Heart right ventricle (tissue), 16 donors: ENCODE measurements at regions of chr17 and their contacts with region 1.

Region 1: DNA sequence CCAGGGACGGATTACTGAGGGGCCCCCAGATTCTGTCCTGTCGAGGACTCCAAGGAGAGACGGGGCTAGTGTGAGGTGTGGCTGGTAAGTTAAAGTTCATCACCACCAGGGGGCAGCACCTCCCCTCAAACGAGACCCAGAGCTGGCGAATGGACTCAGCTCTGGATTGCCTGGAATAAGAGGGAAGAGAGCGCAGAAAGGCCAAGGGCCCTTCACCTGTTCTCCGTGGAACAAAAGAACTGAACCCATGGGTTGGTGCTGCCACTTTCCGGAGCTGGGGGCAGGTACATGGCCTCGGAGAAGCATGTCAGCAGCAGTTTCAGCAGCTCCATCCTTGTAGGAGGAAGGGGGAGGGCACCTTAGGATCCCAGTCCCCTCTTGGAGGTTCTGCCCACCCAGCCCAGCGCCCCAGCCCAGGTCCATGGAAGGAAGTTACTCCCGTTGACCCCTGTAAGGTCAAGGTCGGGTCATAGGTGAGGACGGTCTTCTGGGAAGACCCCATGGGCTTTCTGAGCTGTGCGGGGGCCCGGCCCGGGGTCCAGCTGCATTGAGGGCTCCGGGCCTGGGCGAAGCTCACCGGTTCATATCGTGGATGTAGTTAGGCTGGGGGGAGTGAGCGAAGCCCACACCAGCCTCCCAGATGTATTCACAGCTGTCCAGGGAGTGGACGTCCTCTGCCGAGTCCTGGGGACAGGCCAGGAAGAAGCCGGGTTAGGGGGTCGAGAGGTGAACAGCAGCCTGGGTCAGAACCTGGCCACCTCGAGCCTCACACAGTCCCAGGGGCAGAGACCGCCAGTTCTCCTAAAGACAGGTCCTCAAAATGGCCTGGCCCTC is 10.7 kb downstream of the HID1 start:
- DNase-seq: peak; percentile 85 to 90
- ATAC-seq: peak; percentile 79 to 93 (median 90)
- H3K4me3 ChIP-seq: no peak overlapping the region
- H3K27ac ChIP-seq: no peak overlapping the region
- H3K4me1 ChIP-seq: peaks cover 0 to 6% (median 4%) of the 10 kb centered on the region in 9 donors
- H3K27me3 ChIP-seq: no peaks in the 10 kb centered on the region
- CTCF ChIP-seq: peak; percentile 67 to 87 (median 83)

Region 2: GRCh38 chr17:74923533-74924249 is 38.2 kb before region 1 on chr17:
- intact Hi-C with region 1: loop called in 2 of 10 experiments (anchors 5 kb)
- DNase-seq: peak; percentile 54 to 78
- ATAC-seq: peak; percentile 55 to 72 (median 62)
- H3K4me3 ChIP-seq: peak overlapping the region in 9 of 10 donors; percentile 16 to 46 (median 30)
- H3K27ac ChIP-seq: no peak overlapping the region
- H3K4me1 ChIP-seq: peaks cover 2 to 31% (median 22%) of the 10 kb centered on the region in 9 donors
- H3K27me3 ChIP-seq: peaks cover 22 to 96% (median 91%) of the 10 kb centered on the region in 7 donors
- CTCF ChIP-seq: peak; percentile 51 to 93 (median 79)

Region 3: DNA sequence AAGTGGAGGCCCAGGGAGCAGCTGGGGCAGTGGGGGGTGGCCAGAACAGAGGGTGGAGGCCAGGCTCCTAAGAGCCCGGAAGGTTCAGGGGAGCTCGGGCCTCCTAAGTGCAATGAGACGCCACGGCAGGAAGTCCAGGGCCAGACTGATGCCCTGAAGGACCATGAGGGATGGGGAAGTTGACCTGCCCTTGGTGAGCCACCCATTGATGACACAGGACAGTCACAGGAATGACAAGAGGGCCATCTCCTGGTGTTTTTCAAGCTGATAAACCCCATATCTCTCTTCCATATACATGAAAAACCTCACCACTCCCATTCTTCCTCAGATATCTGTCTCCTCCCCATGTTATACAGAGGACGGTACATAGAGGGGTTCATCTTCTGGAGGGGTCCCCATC is 44.8 kb after region 1 on chr17:
- intact Hi-C with region 1: loop called in 7 of 10 experiments (anchors 5 to 10 kb)
- DNase-seq: no peak
- ATAC-seq: no peak
- H3K4me3 ChIP-seq: no peak overlapping the region
- H3K27ac ChIP-seq: no peak overlapping the region
- H3K4me1 ChIP-seq: peaks cover 3 to 17% (median 11%) of the 10 kb centered on the region in 9 donors
- H3K27me3 ChIP-seq: no peaks in the 10 kb centered on the region
- CTCF ChIP-seq: no peak

Region 4: GRCh38 chr17:75034236-75034908 is 72.5 kb after region 1 on chr17:
- intact Hi-C with region 1: loop called in 2 of 10 experiments (anchors 2 to 5 kb)
- DNase-seq: peak; percentile 81 to 90
- ATAC-seq: peak; percentile 68 to 87 (median 80)
- H3K4me3 ChIP-seq: peak overlapping the region; percentile 46 to 72 (median 66)
- H3K27ac ChIP-seq: peak overlapping the region; percentile 8 to 90 (median 84)
- H3K4me1 ChIP-seq: peaks cover 0 to 54% (median 44%) of the 10 kb centered on the region in 9 donors
- H3K27me3 ChIP-seq: no peaks in the 10 kb centered on the region
- CTCF ChIP-seq: peak in 1 of 9 donors; percentile 8

Region 5: DNA sequence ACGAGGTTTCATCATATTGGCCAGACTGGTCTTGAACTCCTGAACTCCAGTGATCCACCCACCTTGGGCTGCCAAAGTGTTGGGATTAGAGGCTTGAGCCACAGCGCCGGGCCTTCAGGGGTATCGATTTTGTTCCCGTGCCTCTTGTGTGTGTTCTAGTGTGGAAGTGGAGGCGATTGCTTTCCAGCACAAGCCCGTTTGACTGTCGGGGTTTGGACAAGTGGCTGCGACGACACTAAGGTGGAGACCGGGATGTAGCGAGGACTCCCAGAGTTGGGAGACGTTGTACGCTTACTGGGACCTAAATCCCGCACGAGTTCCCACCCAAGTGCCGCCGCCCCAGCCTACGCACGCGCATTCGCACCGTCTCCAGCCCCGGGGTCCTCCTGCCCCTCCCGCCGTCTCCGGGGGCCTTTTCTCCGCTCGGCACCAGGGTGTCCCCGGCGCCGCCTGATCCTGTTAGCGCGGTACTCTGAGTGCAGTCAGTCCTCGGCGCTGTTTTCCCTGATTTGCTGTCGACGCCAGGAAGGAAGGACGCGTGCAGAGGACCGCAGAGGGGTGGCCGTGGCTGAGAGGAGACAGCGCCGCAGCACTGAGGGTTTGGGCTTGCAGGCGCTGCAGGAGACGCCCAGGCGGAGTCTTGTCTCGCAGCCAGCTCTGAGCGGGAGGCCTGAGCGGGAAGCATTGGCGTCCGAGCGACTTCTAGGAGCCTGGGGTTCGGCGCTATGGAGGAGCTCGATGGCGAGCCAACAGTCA is 243.3 kb after region 1 on chr17 and contains the start of gene NUP85:
- intact Hi-C with region 1: loop called in 8 of 10 experiments (anchors 1 to 10 kb)
- DNase-seq: peak; percentile 95 to 96
- ATAC-seq: peak; percentile 93 to 98 (median 96)
- H3K4me3 ChIP-seq: peak within 1 kb of the TSS; percentile 67 to 99 (median 86)
- H3K27ac ChIP-seq: peak within 1 kb of the TSS; percentile 92 to 98 (median 96)
- H3K4me1 ChIP-seq: peaks cover 5 to 28% (median 21%) of the 10 kb centered on the region in 9 donors
- H3K27me3 ChIP-seq: no peaks in the 10 kb centered on the region
- CTCF ChIP-seq: no peak
- total RNA-seq, gene NUP85: 16.2 to 28.4 (median 20.4) TPM

Region 6: GRCh38 chr17:75771334-75772281 is 809.7 kb after region 1 on chr17:
- intact Hi-C with region 1: no loop called
- DNase-seq: no peak
- ATAC-seq: no peak
- H3K4me3 ChIP-seq: no peak overlapping the region
- H3K27ac ChIP-seq: no peak overlapping the region
- H3K4me1 ChIP-seq: peaks cover 9 to 21% (median 17%) of the 10 kb centered on the region in 9 donors
- H3K27me3 ChIP-seq: no peaks in the 10 kb centered on the region
- CTCF ChIP-seq: peak in 4 of 9 donors; percentile 7 to 31 (median 12)